Right lobe of liver (tissue), 6 donors: ENCODE measurements at regions of chr1 and their contacts with region 1.

Region 1: GRCh38 chr1:112337028-112337531 is 58.9 kb upstream of the CTTNBP2NL start:
- DNase-seq: peak in 2 of 3 donors; percentile 52 to 57
- ATAC-seq: peak; percentile 87 to 96 (median 90)
- H3K4me3 ChIP-seq: no peak overlapping the region
- H3K27ac ChIP-seq: no peak overlapping the region
- H3K4me1 ChIP-seq: no peaks in the 10 kb centered on the region
- H3K27me3 ChIP-seq: no peaks in the 10 kb centered on the region
- CTCF ChIP-seq: peak; percentile 48 to 64 (median 62)
- POLR2A ChIP-seq: no peak

Region 2: GRCh38 chr1:111789666-111790316 is 547.3 kb before region 1 on chr1:
- intact Hi-C with region 1: loop called in 1 of 2 experiments (anchors 10 kb)
- DNase-seq: no peak
- ATAC-seq: peak in 3 of 4 donors; percentile 29 to 45 (median 34)
- H3K4me3 ChIP-seq: no peak overlapping the region
- H3K27ac ChIP-seq: no peak overlapping the region
- H3K4me1 ChIP-seq: no peaks in the 10 kb centered on the region
- H3K27me3 ChIP-seq: no peaks in the 10 kb centered on the region
- CTCF ChIP-seq: peak in 3 of 4 donors; percentile 31 to 42 (median 39)
- POLR2A ChIP-seq: no peak

Region 3: DNA sequence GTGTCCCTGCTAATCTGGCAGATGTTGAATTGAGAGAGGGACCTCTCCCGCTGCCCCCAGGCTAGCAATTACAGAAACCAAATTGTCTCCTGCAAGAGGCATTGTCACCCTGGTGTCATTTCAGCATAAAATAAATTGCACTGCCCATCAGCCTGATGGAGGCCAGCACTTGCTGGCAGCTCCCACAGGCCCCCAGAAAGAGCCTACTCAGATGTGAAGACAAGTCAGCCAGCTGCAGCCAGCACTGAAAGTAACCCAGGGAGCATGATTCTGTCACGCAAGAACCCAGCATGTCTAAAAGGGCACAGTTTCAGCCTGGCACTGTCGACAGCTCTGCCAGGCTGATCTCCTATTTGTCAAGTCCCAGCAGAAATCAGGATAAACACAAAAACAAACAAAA is 51.3 kb before region 1 on chr1:
- intact Hi-C with region 1: no loop called
- DNase-seq: no peak
- ATAC-seq: no peak
- H3K4me3 ChIP-seq: no peak overlapping the region
- H3K27ac ChIP-seq: no peak overlapping the region
- H3K4me1 ChIP-seq: no peaks in the 10 kb centered on the region
- H3K27me3 ChIP-seq: no peaks in the 10 kb centered on the region
- CTCF ChIP-seq: no peak
- POLR2A ChIP-seq: no peak